Astrocyte of the cerebellum (primary cell): ENCODE measurements at regions of chr13 and their contacts with region 1.

Region 1: DNA sequence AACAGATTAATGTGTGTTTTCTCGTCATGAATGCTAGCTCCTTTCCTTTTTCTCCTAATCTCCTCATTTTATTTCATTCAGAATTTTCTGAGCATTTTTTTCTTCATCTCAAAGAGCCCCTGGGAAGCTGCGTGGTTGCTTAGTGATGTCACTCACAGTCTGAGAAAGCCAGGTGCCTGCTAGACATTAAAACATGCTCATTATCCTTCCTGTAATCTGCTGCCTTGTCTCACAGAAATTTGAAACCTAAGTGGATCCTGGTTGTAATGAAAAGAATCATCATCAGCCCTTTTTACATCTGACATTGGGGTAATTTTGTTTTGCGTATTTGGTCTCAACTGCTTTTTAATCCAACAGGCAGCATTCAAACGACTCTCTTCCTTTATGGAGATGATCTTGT is 108.2 kb upstream of the RNF113B start:
- DNase-seq: no peak
- H3K4me3 ChIP-seq: no peak overlapping the region
- CTCF ChIP-seq: no peak

Region 2: GRCh38 chr13:98239162-98240076 is 45.9 kb before region 1 on chr13:
- in situ Hi-C with region 1: loop called (anchors 5 kb)
- DNase-seq: no peak
- H3K4me3 ChIP-seq: no peak overlapping the region
- CTCF ChIP-seq: no peak

Region 3: GRCh38 chr13:98327371-98328270 is 42.3 kb after region 1 on chr13:
- in situ Hi-C with region 1: no loop called
- DNase-seq: peak; percentile 29
- H3K4me3 ChIP-seq: no peak overlapping the region
- CTCF ChIP-seq: no peak

Region 4: DNA sequence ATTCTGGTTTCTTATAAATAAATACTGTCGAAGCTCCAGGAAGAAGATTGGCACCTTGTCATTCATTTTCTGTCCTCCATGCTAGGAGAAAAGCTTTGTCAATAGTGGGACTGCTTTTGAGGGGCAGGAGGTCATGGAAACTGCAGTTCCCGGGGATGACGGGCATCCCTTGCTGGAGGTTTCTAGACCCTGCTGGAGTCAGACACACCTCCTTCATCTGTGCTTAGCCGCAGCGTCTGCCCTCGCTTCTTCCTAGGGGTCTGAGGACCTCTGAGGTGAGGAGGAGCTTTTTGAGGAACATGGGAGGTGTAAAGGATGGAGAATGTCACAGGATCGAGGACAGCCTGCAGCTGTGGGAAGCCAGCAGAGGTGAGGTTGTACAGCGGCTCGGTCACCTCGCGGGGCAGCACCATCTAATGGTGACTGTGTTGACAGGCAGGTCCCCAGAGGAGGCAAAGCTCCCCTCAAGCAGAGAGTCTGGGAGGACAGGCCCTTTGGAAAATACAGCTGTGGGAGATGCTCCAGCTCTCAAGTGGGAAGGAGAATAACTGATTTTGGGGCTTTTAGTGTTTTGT is 64.5 kb after region 1 on chr13:
- in situ Hi-C with region 1: loop called (anchors 5 kb)
- DNase-seq: no peak
- H3K4me3 ChIP-seq: no peak overlapping the region
- CTCF ChIP-seq: no peak

Region 5: DNA sequence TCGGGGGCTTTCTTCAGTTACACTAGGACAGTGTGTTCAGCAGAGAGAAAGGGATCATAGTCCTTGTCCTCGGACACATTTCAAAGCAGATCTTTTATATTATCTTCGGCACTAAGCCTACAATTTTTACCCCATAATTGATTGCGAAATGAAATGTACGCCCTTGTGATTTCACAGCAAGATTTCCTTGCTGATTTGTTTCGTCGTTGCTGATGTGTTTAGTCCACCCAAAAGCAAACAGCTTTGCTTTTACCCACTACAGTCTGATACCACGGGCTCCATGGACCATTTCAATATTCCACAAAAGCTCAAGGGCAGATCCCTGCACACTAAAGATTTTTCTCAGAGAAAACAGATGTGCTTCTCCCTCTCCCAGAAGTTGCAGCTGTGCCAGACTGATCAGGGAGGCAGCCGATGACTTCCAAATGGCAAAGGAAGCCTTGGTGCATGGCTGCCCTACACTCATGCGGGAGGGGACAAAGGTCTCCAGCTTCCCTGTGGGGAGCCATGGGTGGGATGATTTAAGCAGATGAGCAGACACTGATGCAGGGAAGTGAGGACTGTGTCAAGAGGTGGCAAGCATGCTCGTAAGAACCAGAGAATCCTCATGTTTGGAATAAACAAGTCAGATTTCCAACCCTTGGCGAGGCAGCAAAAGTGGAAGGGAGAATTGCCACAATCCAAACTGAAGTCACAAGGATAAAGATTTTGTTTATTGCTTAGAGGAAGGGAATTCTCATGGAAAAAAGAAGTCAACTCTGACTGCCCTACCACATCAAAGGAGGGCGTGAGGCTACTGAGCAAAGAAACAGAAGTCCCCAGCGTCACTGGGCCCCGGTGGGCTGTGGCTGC is 210.5 kb after region 1 on chr13:
- in situ Hi-C with region 1: no loop called
- DNase-seq: no peak
- H3K4me3 ChIP-seq: no peak overlapping the region
- CTCF ChIP-seq: no peak